ENCODE measurements at regions of chr4 and their contacts with region 1.

Region 1: GRCh38 chr4:48085821-48086607 is 48.0 kb downstream of the TXK start:
- DNase-seq: no peak
- H3K4me3 Mint-ChIP-seq: no peak overlapping the region
- H3K27ac Mint-ChIP-seq: peak overlapping the region; percentile 24
- H3K4me1 Mint-ChIP-seq: peaks cover 1% of the 10 kb centered on the region
- H3K27me3 Mint-ChIP-seq: no peaks in the 10 kb centered on the region

Region 2: GRCh38 chr4:47315346-47315745 is 770.7 kb before region 1 on chr4:
- intact Hi-C with region 1: no loop called
- DNase-seq: no peak
- H3K4me3 Mint-ChIP-seq: no peak overlapping the region
- H3K27ac Mint-ChIP-seq: no peak overlapping the region
- H3K4me1 Mint-ChIP-seq: peaks cover 2% of the 10 kb centered on the region
- H3K27me3 Mint-ChIP-seq: no peaks in the 10 kb centered on the region

Region 3: DNA sequence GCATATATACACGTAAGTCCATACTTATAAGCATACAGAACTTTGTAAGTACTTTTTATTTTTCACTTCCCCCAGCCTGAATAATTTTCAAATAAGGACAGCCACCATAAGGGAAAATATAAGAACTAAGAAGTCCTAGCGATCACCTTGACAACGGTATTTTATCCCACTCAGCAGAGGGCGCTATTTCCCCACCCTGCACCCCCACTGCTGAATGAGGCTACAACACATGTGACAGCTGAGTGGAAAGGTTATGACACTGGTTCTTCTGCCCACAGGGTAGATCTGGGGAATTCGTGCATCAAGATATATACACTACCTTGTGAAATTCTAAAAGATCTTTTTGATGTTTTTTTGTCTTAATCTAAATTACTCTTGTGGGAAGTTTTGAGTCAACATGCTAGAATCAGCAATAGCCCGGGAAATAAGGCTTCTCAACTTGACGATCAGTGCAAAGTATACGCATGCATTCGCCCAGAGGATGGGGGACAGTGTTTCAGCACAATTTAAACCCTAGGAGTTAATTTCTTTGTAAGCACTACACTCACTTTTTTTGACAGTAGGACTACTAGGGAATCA is 399.6 kb before region 1 on chr4:
- intact Hi-C with region 1: loop called (anchors 1 kb)
- DNase-seq: peak; percentile 88
- H3K4me3 Mint-ChIP-seq: no peak overlapping the region
- H3K27ac Mint-ChIP-seq: no peak overlapping the region
- H3K4me1 Mint-ChIP-seq: peaks cover 3% of the 10 kb centered on the region
- H3K27me3 Mint-ChIP-seq: peaks cover 17% of the 10 kb centered on the region

Region 4: GRCh38 chr4:48008021-48008596 is 77.9 kb before region 1 on chr4:
- intact Hi-C with region 1: loop called (anchors 1 kb)
- DNase-seq: no peak
- H3K4me3 Mint-ChIP-seq: no peak overlapping the region
- H3K27ac Mint-ChIP-seq: no peak overlapping the region
- H3K4me1 Mint-ChIP-seq: no peaks in the 10 kb centered on the region
- H3K27me3 Mint-ChIP-seq: no peaks in the 10 kb centered on the region

Region 5: DNA sequence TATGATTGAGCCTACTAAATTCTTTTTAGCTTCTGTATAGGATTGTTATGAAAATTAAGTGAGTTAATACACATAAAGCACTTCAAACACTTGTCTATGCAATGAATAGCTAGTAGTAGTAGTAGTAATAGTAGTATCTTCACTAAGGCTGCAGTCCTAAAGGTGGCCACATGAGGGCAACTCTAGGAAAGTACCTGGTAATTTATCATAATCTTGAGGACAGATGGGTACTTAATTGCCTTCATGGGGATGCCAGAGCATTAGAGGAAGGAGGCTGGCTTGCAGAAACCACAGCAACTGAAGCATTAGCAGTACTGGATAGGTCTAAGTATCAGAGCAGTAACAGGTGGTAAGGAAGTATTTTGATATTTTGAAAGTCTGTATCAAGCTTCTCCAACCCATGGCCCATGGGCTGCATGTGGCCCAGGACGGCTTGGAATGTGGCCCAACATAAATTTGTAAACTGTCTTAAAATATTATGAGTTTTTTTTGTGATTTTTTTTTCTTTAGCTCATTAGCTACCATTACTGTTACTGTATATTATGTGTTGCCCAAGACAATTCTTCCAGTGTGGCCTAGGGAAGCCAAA is 52.1 kb before region 1 on chr4:
- intact Hi-C with region 1: loop called (anchors 1 kb)
- DNase-seq: peak; percentile 87
- H3K4me3 Mint-ChIP-seq: no peak overlapping the region
- H3K27ac Mint-ChIP-seq: no peak overlapping the region
- H3K4me1 Mint-ChIP-seq: peaks cover 24% of the 10 kb centered on the region
- H3K27me3 Mint-ChIP-seq: peaks cover 2% of the 10 kb centered on the region

Region 6: GRCh38 chr4:48141048-48141447 is 55.0 kb after region 1 on chr4:
- intact Hi-C with region 1: no loop called
- DNase-seq: peak; percentile 48
- H3K4me3 Mint-ChIP-seq: no peak overlapping the region
- H3K27ac Mint-ChIP-seq: no peak overlapping the region
- H3K4me1 Mint-ChIP-seq: peaks cover 44% of the 10 kb centered on the region
- H3K27me3 Mint-ChIP-seq: no peaks in the 10 kb centered on the region